ENCODE measurements at regions of chr2 and their contacts with region 1.

Region 1: DNA sequence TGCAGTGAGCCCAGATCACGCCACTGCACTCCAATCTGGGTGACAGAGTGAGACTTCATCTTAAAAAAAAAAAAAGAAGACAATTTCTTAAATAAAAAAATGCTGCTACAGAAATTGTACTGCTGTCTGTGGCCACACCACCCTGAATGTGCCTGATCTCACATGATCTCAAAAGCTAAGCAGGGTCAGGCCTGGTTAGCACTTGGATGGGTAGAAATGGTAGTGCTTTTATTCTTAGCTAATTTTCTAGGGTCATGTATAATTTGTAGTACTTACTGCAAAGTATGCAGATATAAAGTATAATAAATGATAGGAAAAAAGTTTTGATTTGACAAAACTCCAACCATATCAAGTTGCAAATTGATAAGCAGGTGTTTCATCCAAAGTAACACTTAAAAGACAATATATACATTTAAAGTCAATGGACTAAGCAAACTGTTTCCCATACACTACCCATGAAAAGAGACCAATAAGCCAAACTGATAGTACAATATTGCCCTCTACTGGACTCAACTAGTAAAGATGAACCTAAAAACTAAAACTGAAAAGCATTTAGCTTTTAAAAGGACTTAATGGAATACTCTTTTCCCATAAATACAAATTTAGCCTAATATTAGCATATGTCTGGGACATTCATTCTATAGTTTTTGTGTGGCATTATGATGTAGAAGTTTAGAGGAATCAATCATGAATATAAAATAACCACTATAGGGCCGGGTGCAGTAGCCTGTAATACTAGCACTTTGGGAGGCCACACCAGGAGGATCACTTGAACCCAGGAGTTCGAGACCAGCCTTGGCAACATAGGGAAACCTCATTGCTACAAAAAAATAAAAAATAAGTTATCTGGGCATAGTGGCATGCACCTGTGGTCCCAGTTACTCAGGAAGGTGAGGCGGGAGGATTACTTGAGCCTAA is 18.6 kb upstream of the PEX13 start:
- DNase-seq: peak in 1 of 2 donors; percentile 78
- H3K4me3 ChIP-seq: no peak overlapping the region
- H3K27ac ChIP-seq: no peak overlapping the region
- H3K4me1 ChIP-seq: no peaks in the 10 kb centered on the region
- H3K27me3 ChIP-seq: no peaks in the 10 kb centered on the region
- CTCF ChIP-seq: peak in 5 of 7 experiments; percentile 19 to 74 (median 54)
- EP300 ChIP-seq: no peak
- POLR2A ChIP-seq: no peak

Region 2: GRCh38 chr2:60707750-60708371 is 291.0 kb before region 1 on chr2:
- intact Hi-C with region 1: loop called (anchors 5 kb)
- DNase-seq: peak in 1 of 2 donors; percentile 62
- H3K4me3 ChIP-seq: no peak overlapping the region
- H3K27ac ChIP-seq: no peak overlapping the region
- H3K4me1 ChIP-seq: peaks cover 0 to 4% (median 0%) of the 10 kb centered on the region in 4 donors
- H3K27me3 ChIP-seq: no peaks in the 10 kb centered on the region
- CTCF ChIP-seq: peak in 5 of 7 experiments; percentile 26 to 85 (median 54)
- EP300 ChIP-seq: no peak
- POLR2A ChIP-seq: no peak

Region 3: DNA sequence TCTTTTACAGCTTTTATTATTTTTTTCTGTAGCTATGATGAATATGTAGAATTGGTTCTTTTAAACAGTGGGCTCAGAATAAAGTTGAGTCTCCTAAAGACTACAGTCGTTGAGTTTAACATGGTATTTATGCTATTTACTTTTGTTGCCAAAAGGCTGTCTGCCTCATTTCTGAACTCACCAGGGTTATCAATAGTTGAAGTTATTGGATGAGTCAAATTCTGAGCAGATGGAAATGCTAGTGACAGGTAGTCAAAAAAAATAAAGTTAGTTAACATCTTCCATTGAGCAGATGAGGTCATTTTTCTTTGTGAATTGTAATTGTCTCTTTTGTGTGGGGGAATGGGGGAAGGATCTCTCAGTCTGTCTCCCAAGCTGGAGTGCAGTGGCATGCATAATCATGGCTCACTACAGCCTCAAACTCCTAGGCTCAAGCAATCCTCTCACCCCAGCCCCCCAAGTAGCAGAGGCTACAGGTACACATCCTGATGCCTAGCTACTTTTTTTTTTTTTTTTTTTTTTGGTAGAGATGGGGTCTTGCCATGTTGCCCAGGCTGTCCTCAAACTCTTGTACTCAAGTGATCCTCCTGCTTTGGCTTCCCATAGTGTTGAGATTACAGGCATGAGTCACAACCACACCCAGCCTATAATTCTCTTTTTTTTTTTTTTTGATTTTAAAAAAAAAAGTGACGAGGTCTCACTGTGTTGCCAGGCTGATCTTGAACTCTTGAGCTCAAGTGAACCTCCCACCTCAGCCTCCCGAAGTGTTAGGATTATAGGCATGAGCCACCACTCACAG is 234.0 kb before region 1 on chr2:
- intact Hi-C with region 1: no loop called
- DNase-seq: no peak
- H3K4me3 ChIP-seq: no peak overlapping the region
- H3K27ac ChIP-seq: no peak overlapping the region
- H3K4me1 ChIP-seq: peaks cover 0 to 7% (median under 1%) of the 10 kb centered on the region in 4 donors
- H3K27me3 ChIP-seq: no peaks in the 10 kb centered on the region
- CTCF ChIP-seq: no peak
- EP300 ChIP-seq: no peak
- POLR2A ChIP-seq: no peak

Region 4: GRCh38 chr2:60794277-60794863 is 204.5 kb before region 1 on chr2:
- intact Hi-C with region 1: loop called (anchors 10 kb)
- DNase-seq: peak in 1 of 2 donors; percentile 45
- H3K4me3 ChIP-seq: no peak overlapping the region
- H3K27ac ChIP-seq: no peak overlapping the region
- H3K4me1 ChIP-seq: no peaks in the 10 kb centered on the region
- H3K27me3 ChIP-seq: no peaks in the 10 kb centered on the region
- CTCF ChIP-seq: peak in 4 of 7 experiments; percentile 15 to 47 (median 32)
- EP300 ChIP-seq: no peak
- POLR2A ChIP-seq: no peak

Region 5: DNA sequence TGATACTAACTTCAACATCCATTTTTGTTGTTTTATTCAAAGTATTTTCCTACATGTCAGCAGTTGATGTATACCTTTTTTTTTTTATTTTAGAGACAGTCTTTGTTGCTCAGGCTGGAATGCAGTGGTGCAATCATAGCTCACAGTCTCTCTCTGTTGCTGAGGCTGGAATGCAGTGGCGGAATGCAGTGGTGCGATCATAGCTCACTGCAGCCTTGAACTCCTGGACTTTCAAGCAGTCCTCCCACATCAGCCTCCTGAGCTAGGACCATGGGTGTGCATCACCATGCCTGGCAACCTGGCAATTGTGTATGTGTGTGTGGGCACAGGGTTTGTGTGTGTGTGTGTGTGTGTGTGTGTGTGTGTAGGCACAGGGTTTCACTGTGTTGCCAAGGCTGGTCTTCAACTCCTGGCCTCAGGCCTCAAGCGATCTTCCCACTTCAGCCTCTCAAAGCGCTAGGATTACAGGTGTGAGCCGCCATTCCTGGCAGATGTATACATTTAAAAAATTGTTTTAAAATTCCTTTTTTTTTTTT is 91.6 kb after region 1 on chr2:
- intact Hi-C with region 1: no loop called
- DNase-seq: no peak
- H3K4me3 ChIP-seq: no peak overlapping the region
- H3K27ac ChIP-seq: no peak overlapping the region
- H3K4me1 ChIP-seq: no peaks in the 10 kb centered on the region
- H3K27me3 ChIP-seq: no peaks in the 10 kb centered on the region
- CTCF ChIP-seq: no peak
- EP300 ChIP-seq: no peak
- POLR2A ChIP-seq: no peak